Sciatic nerve (tissue), 2 donors: ENCODE measurements at regions of chr7 and their contacts with region 1.

Region 1: DNA sequence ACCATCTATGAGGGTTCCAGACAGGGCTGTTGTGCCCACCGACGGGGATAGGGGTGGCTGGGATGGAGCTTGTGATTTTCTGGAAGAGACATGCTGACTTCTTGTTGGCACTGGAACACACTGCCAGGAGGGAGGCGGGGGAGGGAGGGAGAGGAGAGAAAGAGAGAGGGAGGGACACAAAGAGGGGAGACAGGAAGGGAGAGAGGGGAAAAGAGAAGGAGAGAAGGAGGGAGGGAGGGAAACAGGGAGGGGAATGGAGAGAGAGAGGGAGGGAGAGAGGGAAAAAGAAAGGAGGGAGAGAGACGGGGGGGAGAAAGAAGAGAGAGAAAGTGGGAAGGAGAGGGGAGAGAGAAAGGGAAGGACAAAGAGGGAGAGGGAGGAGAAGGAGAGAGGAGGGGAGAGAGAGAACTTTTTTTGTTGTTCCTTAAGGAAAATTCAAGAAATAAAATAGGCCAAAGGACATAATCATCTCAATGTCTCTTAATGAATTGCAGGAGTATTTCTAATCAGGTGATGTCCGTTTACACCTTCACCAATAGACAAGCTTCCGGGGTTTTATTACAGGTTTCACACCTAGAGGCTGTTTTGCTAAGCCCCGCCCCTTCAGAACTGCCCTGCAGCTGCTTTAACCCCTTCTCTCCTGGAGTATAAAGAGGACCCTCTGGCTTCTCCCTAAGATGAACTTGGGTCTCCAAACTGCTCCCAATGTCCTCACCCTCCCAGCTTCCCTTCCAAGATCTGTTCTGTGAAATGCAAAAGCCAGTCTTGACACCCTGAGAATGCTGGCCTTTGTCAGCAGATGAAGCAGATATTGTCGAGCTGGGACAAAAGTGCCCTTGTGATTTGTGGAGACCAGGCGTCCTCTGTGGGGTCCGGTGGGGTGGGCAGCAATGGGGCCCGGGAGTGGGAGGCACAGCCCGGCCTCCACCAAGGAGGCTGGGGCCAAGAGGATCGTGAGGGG is 82.0 kb upstream of the GTF2IRD1 start:
- DNase-seq: no peak
- ATAC-seq: peak; percentile 61

Region 2: DNA sequence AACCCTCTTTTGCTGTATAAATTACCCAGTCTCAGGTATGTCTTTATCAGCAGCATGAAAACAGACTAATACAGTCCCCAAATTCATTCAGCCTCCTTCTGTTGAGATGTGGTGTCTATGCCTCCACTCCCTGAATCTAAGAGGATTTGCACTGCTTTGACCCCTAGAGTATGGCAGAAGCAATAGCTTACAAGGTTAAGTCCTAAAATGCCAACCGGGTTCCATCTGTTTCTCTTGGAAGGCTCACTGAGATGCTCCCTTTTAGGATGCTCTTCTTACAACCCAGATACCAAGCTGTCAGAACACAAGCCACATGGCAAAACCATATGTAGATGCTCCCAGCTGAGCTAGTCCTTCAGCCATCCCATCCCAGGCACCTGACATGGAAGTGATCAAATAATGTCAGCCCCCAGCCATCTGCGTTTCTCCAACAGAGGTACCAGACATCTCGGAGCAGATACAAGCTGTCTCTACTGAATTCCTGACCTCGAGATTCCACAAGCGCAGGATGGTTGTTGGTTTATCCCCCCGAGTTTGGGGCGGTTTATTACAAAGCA is 1979.8 kb before region 1 on chr7:
- intact Hi-C with region 1: no loop called
- DNase-seq: no peak
- ATAC-seq: no peak

Region 3: GRCh38 chr7:74289659-74290514 is 81.8 kb before region 1 on chr7:
- intact Hi-C with region 1: loop called (anchors 5 kb)
- DNase-seq: peak; percentile 74
- ATAC-seq: peak; percentile 13